Motor neuron (in vitro differentiated cells): ENCODE measurements at regions of chr6 and their contacts with region 1.

Region 1: DNA sequence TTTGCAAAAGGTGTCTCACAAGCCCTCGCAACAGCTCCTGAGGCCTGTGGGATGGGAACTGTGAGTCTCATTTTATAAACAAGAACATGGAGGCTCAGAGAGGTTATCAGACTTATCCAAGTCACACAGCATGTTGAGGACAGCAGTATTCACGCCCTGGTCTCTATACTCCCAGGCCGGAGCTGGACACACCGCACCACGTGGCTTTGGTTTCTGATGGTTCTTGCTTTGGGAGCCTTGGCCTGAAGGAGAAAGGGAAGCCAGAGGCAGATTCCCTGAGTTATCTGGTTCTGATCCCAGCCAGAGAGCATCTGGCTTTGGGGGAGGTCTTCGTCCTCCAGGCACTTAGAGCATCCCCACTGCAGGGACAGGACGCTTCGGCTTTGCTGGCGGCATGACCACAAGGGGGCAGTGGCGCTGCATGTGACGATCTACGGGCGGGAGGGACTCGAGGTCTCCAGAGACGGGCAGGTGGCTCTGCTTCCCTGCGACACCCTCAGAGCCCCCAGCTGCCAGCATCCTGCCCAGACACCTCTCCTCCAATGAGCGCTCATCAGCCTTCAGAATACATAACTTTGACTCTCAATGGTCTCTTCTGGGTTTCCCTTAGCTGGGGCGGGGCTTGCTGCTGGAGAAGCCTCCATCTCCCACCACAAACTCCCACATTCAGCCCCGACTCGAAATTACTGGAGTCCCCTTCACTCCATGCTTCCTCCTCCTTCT is 51.4 kb upstream of the SAYSD1 start:
- ATAC-seq: peak; percentile 88 to 99 (median 94)
- H3K4me3 ChIP-seq: no peak overlapping the region
- H3K27ac ChIP-seq: no peak overlapping the region
- H3K4me1 ChIP-seq: no peaks in the 10 kb centered on the region

Region 2: DNA sequence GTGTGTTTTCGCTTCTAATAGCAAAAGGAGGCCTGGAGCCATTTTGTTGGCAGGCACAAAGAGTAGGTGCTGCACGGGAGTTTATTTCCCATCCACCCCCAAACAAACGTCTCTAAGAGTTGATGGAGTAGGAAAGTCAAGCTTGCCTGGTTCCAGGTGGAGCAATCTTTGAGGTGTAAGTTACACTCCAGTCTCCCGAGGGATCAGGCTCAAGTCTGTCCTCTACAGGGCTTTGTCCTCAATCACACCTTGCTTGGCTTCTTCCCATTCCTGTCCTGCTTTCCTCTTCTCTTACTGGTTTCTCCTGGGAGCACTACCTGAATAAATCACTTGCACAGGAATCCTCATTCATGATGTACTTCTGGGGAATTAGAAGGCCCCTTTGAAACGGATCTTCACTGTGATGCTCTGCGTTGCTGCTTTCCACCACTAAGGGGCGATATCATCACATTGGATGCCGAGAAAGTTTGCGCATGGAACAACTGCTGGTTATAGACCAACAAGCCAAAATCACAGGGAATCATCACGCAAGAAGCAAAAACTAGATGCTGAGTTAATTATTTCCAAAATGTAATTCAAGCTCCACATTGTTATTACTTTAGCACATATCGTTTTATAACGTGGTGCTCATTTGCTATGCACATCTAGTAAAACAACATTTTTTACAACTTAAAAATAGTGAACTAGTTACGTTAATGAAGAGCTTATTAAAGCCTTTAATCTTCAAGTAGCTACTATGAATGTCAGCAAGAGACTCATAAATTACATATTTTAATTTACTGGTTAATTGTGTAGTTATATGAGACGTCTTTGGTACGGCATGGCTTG is 294.4 kb before region 1 on chr6:
- in situ Hi-C with region 1: loop called in 1 of 9 experiments (anchors 25 kb)
- ATAC-seq: peak in 4 of 8 experiments; percentile 36 to 72 (median 64)
- H3K4me3 ChIP-seq: no peak overlapping the region
- H3K27ac ChIP-seq: no peak overlapping the region
- H3K4me1 ChIP-seq: no peaks in the 10 kb centered on the region

Region 3: GRCh38 chr6:39309942-39310531 is 143.7 kb after region 1 on chr6:
- in situ Hi-C with region 1: loop called (anchors 5 to 25 kb)
- ATAC-seq: peak; percentile 67 to 94 (median 82)
- H3K4me3 ChIP-seq: no peak overlapping the region
- H3K27ac ChIP-seq: no peak overlapping the region
- H3K4me1 ChIP-seq: peaks cover 7 to 8% of the 10 kb centered on the region in 2 donors